A673 (cell line): ENCODE measurements at regions of chr12 and their contacts with region 1.

Region 1: GRCh38 chr12:58131986-58132755 is 190.8 kb downstream of the ATP23 start:
- DNase-seq: no peak
- H3K4me3 ChIP-seq: no peak overlapping the region
- H3K27ac ChIP-seq: no peak overlapping the region
- H3K4me1 ChIP-seq: no peaks in the 10 kb centered on the region
- H3K27me3 ChIP-seq: no peaks in the 10 kb centered on the region
- CTCF ChIP-seq: no peak

Region 2: DNA sequence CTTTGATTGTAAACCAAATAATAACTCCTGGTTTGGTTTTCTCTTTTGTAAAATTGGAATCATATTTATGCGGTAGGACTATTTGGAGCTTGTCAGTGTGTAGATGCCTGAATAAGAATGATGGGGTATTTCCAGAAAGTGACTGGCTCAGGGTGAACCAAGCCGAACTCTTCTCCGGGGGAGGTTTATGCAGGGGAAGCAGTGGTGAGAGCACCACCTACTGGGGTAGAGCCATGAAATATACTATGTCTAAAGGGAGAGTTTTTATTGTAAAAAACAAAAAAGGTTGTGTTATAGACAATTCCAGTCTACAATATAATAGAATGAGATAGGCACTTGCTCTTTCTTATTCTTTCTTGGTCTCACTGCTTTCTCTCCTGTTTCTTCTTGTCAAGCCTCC is 1240.8 kb after region 1 on chr12:
- CTCF ChIA-PET with region 1: no interaction called
- POLR2A ChIA-PET with region 1: interaction called, 16 read pairs
- intact Hi-C with region 1: no loop called
- DNase-seq: peak; percentile 22
- H3K4me3 ChIP-seq: no peak overlapping the region
- H3K27ac ChIP-seq: no peak overlapping the region
- H3K4me1 ChIP-seq: no peaks in the 10 kb centered on the region
- H3K27me3 ChIP-seq: no peaks in the 10 kb centered on the region
- CTCF ChIP-seq: peak; percentile 42; the same call in 1 of the 2 replicates